WTC11 (cell line): ENCODE measurements at regions of chr5 and their contacts with region 1.

Region 1: GRCh38 chr5:116289276-116289675 is 204.5 kb downstream of the COMMD10 start:
- DNase-seq: peak; percentile 67
- ATAC-seq: peak; percentile 100
- H3K4me3 Mint-ChIP-seq: no peak overlapping the region
- H3K27ac Mint-ChIP-seq: peak overlapping the region; percentile 32; the same call in 1 of the 2 replicates
- H3K4me1 Mint-ChIP-seq: peaks cover 9% of the 10 kb centered on the region
- H3K27me3 Mint-ChIP-seq: no peaks in the 10 kb centered on the region
- CTCF ChIP-seq: no peak

Region 2: DNA sequence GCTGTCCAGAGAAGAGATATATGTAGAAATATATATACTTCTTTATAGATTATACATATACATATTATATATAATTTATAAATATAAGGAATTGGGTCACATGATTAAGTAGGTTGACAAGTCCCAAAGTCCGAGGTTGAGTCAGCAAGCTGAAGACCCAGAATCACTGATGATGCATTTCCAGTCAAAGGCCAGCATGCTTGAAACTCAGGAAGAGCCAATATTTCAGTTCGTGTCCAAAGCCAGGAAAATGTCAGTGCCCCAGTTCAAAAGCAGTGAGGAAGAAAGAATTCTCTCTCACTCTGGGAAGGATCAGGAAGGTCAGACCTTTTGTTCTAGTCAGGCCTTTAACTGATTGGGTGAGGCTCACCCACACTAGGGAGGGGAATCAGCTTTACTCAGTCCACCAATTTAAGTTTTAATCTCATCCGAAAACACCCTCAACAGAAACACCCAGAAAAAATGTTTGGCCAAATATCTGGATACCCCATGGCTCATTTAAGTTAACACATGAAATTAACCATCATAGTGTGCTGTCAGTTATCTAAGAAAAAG is 369.0 kb before region 1 on chr5:
- CTCF ChIA-PET with region 1: no interaction called
- POLR2A ChIA-PET with region 1: no interaction called
- DNase-seq: no peak
- ATAC-seq: no peak
- H3K4me3 Mint-ChIP-seq: no peak overlapping the region
- H3K27ac Mint-ChIP-seq: no peak overlapping the region
- H3K4me1 Mint-ChIP-seq: no peaks in the 10 kb centered on the region
- H3K27me3 Mint-ChIP-seq: no peaks in the 10 kb centered on the region
- CTCF ChIP-seq: no peak

Region 3: DNA sequence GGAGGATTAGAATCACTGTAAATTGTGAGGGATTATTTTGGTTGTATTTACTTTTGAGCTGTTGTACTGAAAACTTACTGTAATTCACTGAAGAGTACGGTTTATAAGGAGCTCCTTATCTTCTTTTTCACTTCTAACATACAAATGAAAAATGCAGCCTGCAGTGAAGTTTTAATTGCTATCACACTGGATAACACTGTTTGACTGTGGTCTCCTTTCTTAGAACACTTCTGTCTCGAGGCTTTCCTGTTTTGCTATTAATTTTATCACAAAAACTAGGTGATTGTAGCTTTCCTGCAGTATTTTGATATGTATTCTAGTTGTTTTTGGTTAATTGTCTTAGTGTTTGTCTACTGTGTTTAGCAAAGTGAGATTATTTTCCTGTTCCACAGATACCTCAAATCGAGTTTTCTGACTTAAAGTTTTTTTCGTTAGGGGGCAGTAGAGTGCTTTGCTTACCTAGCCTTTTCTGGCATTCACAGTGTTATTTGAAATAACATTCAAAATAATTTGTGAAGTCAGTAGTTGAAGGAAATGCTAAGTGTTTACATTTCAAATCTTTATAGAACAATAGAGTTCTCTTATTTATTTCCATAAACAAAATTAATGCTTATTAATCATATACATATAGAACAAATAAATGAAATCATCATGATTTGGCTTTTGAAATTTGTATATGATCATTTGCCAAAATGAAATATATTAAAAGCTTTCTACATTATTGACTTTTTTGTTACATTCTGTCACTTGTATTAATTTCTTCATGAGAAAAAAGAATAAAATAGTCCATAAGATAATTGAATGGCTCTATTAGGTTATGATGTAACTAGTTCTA is 151.5 kb before region 1 on chr5:
- CTCF ChIA-PET with region 1: interaction called, 37 read pairs
- POLR2A ChIA-PET with region 1: no interaction called
- DNase-seq: no peak
- ATAC-seq: no peak
- H3K4me3 Mint-ChIP-seq: no peak overlapping the region
- H3K27ac Mint-ChIP-seq: no peak overlapping the region
- H3K4me1 Mint-ChIP-seq: no peaks in the 10 kb centered on the region
- H3K27me3 Mint-ChIP-seq: no peaks in the 10 kb centered on the region
- CTCF ChIP-seq: peak; percentile 56

Region 4: GRCh38 chr5:116144103-116144502 is 145.2 kb before region 1 on chr5:
- CTCF ChIA-PET with region 1: interaction called, 37 read pairs
- POLR2A ChIA-PET with region 1: no interaction called
- DNase-seq: no peak
- ATAC-seq: no peak
- H3K4me3 Mint-ChIP-seq: no peak overlapping the region
- H3K27ac Mint-ChIP-seq: no peak overlapping the region
- H3K4me1 Mint-ChIP-seq: no peaks in the 10 kb centered on the region
- H3K27me3 Mint-ChIP-seq: no peaks in the 10 kb centered on the region
- CTCF ChIP-seq: no peak

Region 5: GRCh38 chr5:116361171-116361967 is 72.1 kb after region 1 on chr5:
- CTCF ChIA-PET with region 1: interaction called, 16 read pairs
- POLR2A ChIA-PET with region 1: no interaction called
- DNase-seq: peak; percentile 82
- ATAC-seq: peak; percentile 92
- H3K4me3 Mint-ChIP-seq: peak overlapping the region; percentile 71
- H3K27ac Mint-ChIP-seq: no peak overlapping the region
- H3K4me1 Mint-ChIP-seq: peaks cover 7% of the 10 kb centered on the region
- H3K27me3 Mint-ChIP-seq: peaks cover 7% of the 10 kb centered on the region
- CTCF ChIP-seq: 0 out of 2 replicates have a peak, but pooled peaks have one; percentile 15

Region 6: GRCh38 chr5:116371935-116372334 is 82.7 kb after region 1 on chr5:
- CTCF ChIA-PET with region 1: no interaction called
- POLR2A ChIA-PET with region 1: no interaction called
- DNase-seq: no peak
- ATAC-seq: no peak
- H3K4me3 Mint-ChIP-seq: no peak overlapping the region
- H3K27ac Mint-ChIP-seq: no peak overlapping the region
- H3K4me1 Mint-ChIP-seq: peaks cover 33% of the 10 kb centered on the region
- H3K27me3 Mint-ChIP-seq: no peaks in the 10 kb centered on the region
- CTCF ChIP-seq: no peak

Region 7: DNA sequence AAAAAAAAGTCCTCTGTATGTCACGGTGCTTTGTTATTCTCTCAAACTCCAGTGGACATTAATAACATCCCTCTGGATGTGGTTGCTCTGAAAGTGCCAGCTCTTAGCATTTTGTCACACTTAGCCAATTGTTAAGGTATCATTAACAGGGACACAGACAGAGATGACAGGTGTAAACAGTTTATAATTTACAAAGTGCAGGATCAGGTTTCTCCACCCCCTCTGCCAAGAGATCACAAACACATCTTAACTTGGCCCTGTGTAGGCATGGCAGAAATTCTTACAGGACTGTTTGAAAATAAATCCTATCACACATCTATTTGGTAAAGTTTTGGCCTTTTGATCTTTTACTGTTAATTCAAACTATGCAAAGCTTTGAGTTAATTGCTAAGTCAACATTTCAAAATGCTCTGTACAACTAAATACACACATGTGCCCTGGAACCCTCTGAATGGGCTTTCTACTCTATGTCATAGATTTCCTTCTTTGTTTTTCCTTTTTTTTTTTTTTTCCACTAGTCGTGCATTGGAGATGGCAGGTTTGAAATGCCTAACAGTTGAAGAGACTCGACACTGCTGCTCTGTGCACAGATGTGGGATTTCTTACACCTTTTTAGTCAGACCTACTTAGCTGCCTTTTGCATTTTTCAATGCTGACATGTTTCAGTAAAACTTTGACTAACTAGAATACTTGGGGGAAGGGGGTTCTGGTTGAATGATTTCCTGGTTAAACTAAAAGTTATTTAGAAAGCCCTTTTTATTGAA is 243.7 kb after region 1 on chr5:
- CTCF ChIA-PET with region 1: no interaction called
- POLR2A ChIA-PET with region 1: no interaction called
- DNase-seq: no peak
- ATAC-seq: no peak
- H3K4me3 Mint-ChIP-seq: no peak overlapping the region
- H3K27ac Mint-ChIP-seq: peak overlapping the region; percentile 75
- H3K4me1 Mint-ChIP-seq: peaks cover 27% of the 10 kb centered on the region
- H3K27me3 Mint-ChIP-seq: no peaks in the 10 kb centered on the region
- CTCF ChIP-seq: no peak